Cardiac septum (tissue), 1 donor: ENCODE measurements at regions of chr19 and their contacts with region 1.

Region 1: DNA sequence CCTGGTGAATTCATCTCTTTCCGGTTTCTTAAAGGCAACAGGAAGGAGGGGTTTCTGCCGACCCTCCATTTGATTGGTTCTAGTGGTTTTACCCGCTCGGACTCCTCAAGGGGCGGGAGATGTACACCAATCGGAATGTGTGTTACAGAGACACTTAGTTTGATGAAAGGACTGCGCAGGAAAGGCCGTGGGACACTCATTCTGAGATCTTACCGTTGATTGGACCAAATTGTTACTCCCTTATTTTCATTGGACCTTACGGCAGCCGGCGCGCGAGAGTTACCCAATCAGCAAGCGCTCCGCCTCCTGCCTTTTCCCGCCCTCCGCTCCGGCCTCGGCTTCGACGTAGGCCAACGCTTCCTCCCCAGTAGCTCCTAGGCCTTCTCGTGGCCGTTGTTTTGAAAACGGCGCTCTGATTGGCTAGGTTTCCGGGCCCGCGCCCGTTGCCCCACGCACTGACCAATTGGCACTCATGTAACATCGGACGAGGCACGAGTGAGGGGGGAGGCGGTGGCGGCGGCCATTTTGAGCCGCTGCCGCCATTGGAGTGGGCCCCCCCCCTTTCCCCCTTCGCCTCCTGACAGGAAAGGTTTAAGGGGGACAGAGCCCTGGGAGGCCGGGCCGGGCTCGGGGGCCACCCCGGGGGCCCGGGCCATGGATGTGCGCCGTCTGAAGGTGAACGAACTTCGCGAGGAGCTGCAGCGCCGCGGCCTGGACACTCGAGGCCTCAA is at the start of gene HNRNPUL1:
- DNase-seq: peak; percentile 99
- total RNA-seq, gene HNRNPUL1: 109 TPM

Region 2: GRCh38 chr19:41112728-41113290 is 151.2 kb before region 1 on chr19:
- intact Hi-C with region 1: no loop called
- DNase-seq: peak; percentile 46

Region 3: DNA sequence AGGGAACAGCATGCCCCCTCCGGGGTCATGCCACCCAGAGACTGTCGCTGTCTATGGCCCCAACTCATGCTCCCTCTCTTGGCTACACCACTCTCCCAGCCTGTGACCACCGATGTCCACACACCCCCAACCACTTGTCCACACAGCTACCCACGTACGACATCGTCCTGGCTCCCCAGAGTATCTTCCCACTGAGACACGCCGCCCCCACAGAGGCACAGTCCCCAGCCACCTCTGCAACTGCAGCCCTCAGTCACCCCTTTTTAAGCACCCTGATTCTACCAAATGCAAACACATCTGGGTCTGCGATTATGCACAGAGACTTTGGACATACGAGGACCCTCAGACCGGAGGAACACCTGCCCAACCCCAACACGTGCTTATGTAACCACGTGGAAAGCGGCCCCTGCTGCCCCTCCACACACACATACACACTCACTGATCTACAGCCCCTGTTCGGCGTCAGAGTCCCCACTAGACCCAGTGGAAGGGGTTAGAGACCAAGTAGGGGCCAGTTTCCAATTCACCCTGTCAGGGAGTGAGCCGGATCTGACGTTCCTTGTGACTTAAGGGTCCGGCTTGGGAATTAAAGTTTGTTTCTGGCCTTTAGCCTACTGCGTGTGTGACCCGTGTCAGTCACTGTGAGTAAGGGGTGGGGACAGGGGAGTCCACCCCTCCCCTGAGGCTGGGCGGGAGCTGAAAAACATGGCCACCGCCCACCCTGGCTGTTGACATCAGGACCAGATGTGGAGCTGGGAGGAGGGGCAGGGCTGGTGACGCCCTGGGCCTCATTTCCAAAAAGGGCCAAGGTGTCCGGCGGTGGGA is 56.9 kb before region 1 on chr19:
- intact Hi-C with region 1: loop called (anchors 1 kb)
- DNase-seq: no peak

Region 4: DNA sequence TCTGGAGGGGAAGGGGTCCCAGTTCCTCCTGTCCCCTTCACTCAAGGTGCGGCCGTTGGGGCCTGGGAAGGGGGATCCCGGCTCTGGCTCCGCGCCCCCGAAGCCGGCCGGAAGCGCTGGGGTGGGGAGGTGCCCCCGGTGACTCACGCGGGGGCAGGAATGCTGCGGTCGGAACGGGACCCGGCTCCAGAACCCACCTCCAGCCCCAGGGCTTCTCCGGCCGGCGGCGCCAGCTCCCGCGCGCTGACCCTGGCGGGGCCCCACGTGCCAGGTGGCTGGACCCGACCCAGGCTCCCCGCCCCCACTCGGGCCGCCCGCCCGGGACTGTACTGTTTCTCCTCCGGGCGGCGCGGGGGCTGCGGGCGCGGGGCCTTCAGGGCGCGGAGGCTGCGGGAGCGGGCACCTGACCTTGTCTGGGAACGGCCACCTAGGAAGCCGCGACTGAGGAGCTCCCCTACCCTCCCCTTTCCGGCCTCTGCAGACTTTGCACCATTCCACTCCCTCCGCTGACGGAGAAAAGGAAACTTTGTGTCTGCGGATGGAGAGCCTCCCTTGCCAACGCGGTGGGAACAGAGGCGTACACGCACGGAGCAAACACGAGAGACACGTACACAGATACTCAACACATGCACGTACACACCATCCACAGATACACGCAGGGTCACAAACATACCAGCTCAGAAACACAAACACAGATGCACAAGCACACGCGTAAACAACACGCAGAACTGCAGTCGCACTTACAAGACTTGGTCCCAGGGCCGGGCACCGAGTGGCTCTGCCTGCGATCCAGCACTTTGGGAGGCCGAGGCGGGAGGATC is 37.8 kb before region 1 on chr19:
- intact Hi-C with region 1: loop called (anchors 5 kb)
- DNase-seq: peak; percentile 82

Region 5: GRCh38 chr19:41298348-41298964 is 34.4 kb after region 1 on chr19:
- intact Hi-C with region 1: loop called (anchors 2 kb)
- DNase-seq: peak; percentile 86

Region 6: GRCh38 chr19:41310033-41310758 is 46.2 kb after region 1 on chr19 and contains the start of gene CCDC97:
- intact Hi-C with region 1: loop called (anchors 2 kb)
- DNase-seq: peak; percentile 96
- total RNA-seq, gene CCDC97: 17.0 TPM

Region 7: GRCh38 chr19:41353466-41354342 is 89.7 kb after region 1 on chr19 and contains the start of gene TGFB1:
- intact Hi-C with region 1: loop called (anchors 2 kb)
- DNase-seq: peak; percentile 97
- total RNA-seq, gene TGFB1: 26.4 TPM

Region 8: GRCh38 chr19:41426952-41427646 is 163.1 kb after region 1 on chr19 and contains the start of gene B3GNT8:
- intact Hi-C with region 1: loop called (anchors 5 kb)
- DNase-seq: peak; percentile 96
- total RNA-seq, gene B3GNT8: 3.9 TPM